Heart left ventricle (tissue), 16 donors: ENCODE measurements at regions of chr15 and their contacts with region 1.

Region 1: DNA sequence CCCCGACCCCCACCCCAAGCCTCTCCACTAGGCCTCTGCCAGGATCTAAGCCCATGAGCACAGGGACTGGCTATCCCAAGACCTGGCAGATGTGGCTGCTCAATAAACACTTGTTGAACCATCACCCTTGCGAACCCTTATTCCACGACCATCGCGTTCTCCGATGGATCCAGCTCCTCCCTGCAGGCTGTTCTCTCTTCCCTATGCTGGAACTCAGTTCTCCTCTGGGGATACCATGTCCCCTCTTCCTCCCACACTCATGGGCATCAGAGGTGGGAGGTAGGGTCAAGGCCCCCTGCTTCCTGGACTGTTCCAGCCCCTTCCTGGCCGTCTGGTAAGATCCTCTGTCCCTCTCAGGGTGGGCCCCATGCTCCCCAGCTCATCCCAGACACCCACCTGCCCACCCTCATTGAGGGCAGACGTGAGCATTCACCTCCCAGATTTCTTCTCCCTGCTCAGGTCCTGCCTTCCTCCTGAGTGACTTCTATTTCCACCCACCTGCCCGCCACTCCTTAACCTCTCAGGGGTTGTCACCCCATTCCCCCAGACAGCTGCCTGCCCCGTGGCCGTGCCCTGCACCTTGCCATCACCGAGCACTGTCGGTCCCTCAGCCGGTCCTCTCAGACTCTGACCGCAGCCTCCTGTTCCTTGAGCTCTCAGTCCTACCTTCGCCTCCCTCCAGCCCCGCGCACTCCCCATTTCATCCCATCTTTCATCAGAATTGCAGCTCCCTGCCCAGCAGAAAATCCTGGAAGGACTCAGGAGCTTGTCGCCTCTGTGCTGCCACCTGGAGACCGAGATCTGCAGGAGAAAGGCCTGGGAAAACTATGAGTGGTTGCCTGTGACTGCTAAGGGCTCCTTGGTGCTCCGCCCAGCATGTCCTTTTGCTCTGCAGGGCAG is 42.0 kb downstream of the PML start:
- DNase-seq: peak in 2 of 5 donors; percentile 61 to 71
- ATAC-seq: peak in 2 of 4 donors; percentile 23 to 54
- H3K4me3 ChIP-seq: no peak overlapping the region
- H3K27ac ChIP-seq: peak overlapping the region in 1 of 12 donors; percentile 19
- H3K4me1 ChIP-seq: peaks cover 3 to 58% (median 36%) of the 10 kb centered on the region in 12 donors
- H3K27me3 ChIP-seq: no peaks in the 10 kb centered on the region
- CTCF ChIP-seq: peak in 11 of 12 donors; percentile 30 to 68 (median 56)
- POLR2A ChIP-seq: no peak

Region 2: GRCh38 chr15:73982222-73982962 is 54.1 kb before region 1 on chr15:
- intact Hi-C with region 1: loop called in 2 of 10 experiments (anchors 5 to 10 kb)
- DNase-seq: peak; percentile 86 to 96 (median 92)
- ATAC-seq: peak; percentile 87 to 93 (median 90)
- H3K4me3 ChIP-seq: peak overlapping the region in 6 of 12 donors; percentile 6 to 17 (median 10)
- H3K27ac ChIP-seq: peak overlapping the region; percentile 90 to 99 (median 96)
- H3K4me1 ChIP-seq: peaks cover 20 to 80% (median 66%) of the 10 kb centered on the region in 12 donors
- H3K27me3 ChIP-seq: no peaks in the 10 kb centered on the region
- CTCF ChIP-seq: no peak
- POLR2A ChIP-seq: peak in 1 of 2 donors; percentile 22

Region 3: GRCh38 chr15:74345051-74345450 is 308.5 kb after region 1 on chr15:
- intact Hi-C with region 1: no loop called
- DNase-seq: no peak
- ATAC-seq: no peak
- H3K4me3 ChIP-seq: no peak overlapping the region
- H3K27ac ChIP-seq: no peak overlapping the region
- H3K4me1 ChIP-seq: peaks cover 0 to 3% (median 0%) of the 10 kb centered on the region in 12 donors
- H3K27me3 ChIP-seq: no peaks in the 10 kb centered on the region
- CTCF ChIP-seq: no peak
- POLR2A ChIP-seq: no peak